Activated naive CD4-positive, alpha-beta T cell treated with anti-CD3 and anti-CD28 coated beads for 36 hours (primary cell): ENCODE measurements at regions of chr12 and their contacts with region 1.

Region 1: DNA sequence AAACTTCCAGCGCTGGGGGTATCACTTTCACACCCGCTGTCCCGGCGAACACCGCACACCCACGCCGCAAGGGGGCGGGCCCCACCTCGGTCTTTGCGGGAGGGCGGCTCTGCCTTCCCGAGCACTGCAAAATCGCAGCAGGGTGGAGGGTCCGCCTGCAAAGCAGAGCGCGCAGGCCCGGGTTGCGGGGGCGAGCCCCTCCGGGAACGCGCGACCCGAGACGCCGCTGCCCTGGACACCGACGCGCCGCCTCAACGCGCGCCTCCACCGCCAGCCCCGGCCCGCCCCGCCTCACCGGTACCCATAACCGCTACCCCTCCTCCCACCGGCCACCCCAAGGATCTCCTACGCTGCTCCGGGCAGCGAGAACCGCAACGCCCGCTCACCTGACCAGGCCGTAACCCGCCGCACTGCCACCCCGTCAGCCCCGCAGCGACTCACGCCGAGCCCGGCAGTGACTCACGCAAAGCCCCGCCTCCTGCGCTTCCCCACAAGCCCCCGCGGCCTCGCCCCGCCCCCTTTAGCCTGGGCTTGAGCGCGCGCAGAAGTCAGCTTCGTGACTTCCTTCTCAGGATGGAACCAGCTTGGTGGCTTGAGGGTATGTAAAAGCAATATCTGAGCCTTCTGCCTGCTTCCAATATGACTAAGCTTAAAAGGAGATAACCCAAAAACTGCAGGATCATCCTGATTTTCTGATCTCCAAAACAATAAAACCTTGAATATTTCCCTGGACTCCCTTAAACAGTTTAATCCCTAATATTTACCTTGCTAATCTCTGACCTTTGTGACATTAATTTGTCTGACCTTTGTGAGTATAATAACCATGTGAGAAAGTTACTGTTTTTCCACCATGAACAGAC is at the start of gene RPAP3:
- DNase-seq: peak; percentile 99
- H3K4me3 Mint-ChIP-seq: peak within 1 kb of the TSS; percentile 93
- H3K27ac Mint-ChIP-seq: peak within 1 kb of the TSS; percentile 98
- H3K4me1 Mint-ChIP-seq: peaks cover 49% of the 10 kb centered on the region
- H3K27me3 Mint-ChIP-seq: no peaks in the 10 kb centered on the region
- total RNA-seq, gene RPAP3: 46.2 to 46.7 TPM

Region 2: DNA sequence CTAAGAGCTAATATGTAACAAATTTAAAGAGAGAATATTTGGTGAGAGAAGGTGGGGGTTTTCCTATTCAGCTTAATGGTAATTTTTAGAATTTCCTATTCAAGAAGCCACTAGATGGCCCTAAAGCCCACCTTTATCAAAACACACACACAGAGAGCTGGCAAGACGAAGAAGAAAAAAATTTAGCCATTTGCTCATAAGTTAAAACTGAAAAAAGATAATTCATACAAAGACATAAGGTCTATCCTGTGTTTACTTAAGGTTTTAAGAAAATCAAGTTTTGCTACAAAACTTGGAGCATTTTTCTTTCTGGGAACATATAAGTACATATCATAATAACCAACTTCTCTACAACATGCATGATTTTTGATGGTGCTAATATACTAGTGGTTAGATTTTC is 673.2 kb before region 1 on chr12:
- CTCF ChIA-PET with region 1: interaction called, 3 read pairs
- intact Hi-C with region 1: loop called (anchors 5 kb)
- DNase-seq: peak; percentile 34
- H3K4me3 Mint-ChIP-seq: no peak overlapping the region
- H3K27ac Mint-ChIP-seq: peak overlapping the region; percentile 79
- H3K4me1 Mint-ChIP-seq: peaks cover 43% of the 10 kb centered on the region
- H3K27me3 Mint-ChIP-seq: no peaks in the 10 kb centered on the region

Region 3: GRCh38 chr12:47391566-47391965 is 314.2 kb before region 1 on chr12:
- CTCF ChIA-PET with region 1: no interaction called
- intact Hi-C with region 1: loop called (anchors 1 kb)
- DNase-seq: peak; percentile 88
- H3K4me3 Mint-ChIP-seq: peak overlapping the region; percentile 77
- H3K27ac Mint-ChIP-seq: peak overlapping the region; percentile 100
- H3K4me1 Mint-ChIP-seq: peaks cover 90% of the 10 kb centered on the region
- H3K27me3 Mint-ChIP-seq: no peaks in the 10 kb centered on the region

Region 4: DNA sequence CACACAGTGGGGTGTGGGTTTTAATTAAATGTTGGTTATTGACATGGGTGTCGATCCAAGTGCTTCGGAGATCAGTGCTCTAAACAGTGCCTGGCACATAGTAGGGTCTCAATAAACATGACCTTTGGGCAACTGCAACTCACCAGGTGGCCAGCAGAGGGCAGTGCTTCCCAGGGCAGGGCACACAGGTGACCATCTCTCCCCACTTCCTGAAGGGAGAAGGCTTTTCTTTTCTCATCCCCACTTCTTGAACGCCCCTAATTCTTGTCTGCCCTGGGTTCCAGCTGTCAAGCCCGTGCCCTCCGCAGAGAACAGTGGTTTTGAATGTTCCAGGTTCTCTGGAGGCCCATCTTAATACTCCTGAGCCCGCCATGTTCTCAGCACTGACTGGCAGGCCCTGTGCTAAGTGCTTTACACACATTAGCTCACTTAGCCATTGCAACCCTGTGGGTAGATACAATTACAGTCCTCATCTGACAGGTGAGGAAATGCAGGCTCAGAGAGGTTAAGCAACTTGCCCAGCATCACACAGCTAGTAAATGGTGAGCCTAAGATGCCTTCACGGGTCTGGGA is 36.5 kb after region 1 on chr12:
- CTCF ChIA-PET with region 1: interaction called, 121 read pairs
- intact Hi-C with region 1: no loop called
- DNase-seq: peak; percentile 87
- H3K4me3 Mint-ChIP-seq: no peak overlapping the region
- H3K27ac Mint-ChIP-seq: no peak overlapping the region
- H3K4me1 Mint-ChIP-seq: peaks cover 19% of the 10 kb centered on the region
- H3K27me3 Mint-ChIP-seq: peaks cover 2% of the 10 kb centered on the region

Region 5: DNA sequence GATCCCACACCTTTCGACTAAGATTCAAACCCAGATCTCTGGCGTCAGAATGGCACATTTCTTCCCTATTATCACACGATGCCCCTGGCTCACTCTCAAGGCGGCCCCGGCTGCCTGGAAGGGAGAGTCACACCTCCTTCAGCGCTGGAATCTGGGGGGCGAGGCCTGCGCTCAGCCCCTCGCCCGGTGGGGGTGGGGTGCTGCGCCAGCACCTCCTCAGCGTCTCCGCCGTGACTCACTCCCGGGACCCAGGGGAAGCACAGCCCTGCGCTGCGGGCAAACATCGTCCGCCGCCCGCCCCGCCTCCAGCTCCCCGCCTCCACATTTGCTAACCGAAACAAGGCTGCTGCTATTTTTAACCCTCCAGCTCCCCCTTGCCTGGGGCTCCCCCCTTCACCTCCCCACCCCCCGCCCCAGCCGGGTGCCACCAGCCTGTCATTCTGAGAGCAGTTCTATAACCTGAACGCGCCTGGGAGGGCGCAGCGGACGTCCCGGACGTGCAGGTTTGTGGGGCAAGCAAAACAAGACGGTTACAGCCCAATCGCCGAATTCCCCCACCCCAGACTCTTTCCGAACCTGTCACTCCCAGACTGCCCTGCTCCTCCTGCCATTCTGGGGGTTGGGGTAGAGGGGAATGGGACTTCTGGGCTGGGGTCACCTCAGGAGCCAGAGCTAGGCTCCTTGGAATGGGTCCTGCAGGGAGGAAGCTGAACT is 107.2 kb after region 1 on chr12:
- CTCF ChIA-PET with region 1: no interaction called
- intact Hi-C with region 1: loop called (anchors 2 kb)
- DNase-seq: peak; percentile 99
- H3K4me3 Mint-ChIP-seq: peak overlapping the region; percentile 88
- H3K27ac Mint-ChIP-seq: peak overlapping the region; percentile 98
- H3K4me1 Mint-ChIP-seq: peaks cover 75% of the 10 kb centered on the region
- H3K27me3 Mint-ChIP-seq: no peaks in the 10 kb centered on the region

Region 6: DNA sequence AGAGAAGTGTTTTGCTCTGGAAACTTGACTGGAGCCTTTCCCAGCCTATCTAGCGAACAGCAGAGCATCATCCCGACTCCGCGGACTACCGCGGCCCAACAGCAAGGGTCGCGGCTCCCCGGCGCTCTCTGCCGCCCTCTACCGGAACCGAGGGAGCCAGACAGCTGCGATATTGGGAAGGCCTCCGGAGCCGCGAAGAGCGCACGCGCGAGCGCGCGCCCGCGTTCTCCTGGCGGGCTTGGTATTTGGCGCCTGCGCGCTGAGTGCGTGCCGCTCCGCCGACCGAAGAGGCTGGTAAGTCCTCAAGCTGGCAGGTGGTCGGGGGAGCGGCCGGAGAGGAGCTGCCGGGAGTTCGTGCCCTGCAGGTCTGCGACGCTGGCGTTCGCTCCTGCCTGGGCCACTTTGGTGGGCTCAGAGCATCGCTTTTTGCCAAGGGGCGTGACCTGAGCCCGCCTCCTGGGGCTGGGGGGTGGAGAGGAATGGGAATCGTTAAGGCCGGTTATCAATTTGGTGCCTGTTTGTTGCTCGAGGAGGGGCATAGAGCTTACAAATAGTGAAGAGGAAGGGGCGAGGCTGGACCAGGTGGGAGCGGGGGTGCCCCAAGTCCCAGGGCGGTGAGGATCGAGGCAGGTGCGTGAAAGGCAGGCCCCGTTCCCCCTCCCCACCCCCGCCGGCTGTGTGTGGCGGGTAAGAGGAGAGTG is 257.7 kb after region 1 on chr12 and contains the start of gene TMEM106C:
- CTCF ChIA-PET with region 1: no interaction called
- intact Hi-C with region 1: loop called (anchors 5 kb)
- DNase-seq: peak; percentile 94
- H3K4me3 Mint-ChIP-seq: peak within 1 kb of the TSS; percentile 98
- H3K27ac Mint-ChIP-seq: peak within 1 kb of the TSS; percentile 79
- H3K4me1 Mint-ChIP-seq: peaks cover 30% of the 10 kb centered on the region
- H3K27me3 Mint-ChIP-seq: peaks cover 7% of the 10 kb centered on the region
- total RNA-seq, gene TMEM106C: 226 to 247 TPM